ENCODE measurements at regions of chr20 and their contacts with region 1.

Region 1: GRCh38 chr20:23441850-23442313 is 2.4 kb downstream of the CSTL1 start:
- DNase-seq: peak; percentile 74
- H3K4me3 ChIP-seq: no peak overlapping the region
- H3K27ac ChIP-seq: no peak overlapping the region
- H3K4me1 ChIP-seq: no peaks in the 10 kb centered on the region
- CTCF ChIP-seq: peak; percentile 87

Region 2: GRCh38 chr20:23606652-23607049 is 164.8 kb after region 1 on chr20:
- CTCF ChIA-PET with region 1: no interaction called
- POLR2A ChIA-PET with region 1: interaction called, 3 read pairs
- intact Hi-C with region 1: loop called (anchors 1 kb)
- DNase-seq: peak; percentile 55
- H3K4me3 ChIP-seq: no peak overlapping the region
- H3K27ac ChIP-seq: no peak overlapping the region
- H3K4me1 ChIP-seq: no peaks in the 10 kb centered on the region
- CTCF ChIP-seq: peak; percentile 82